IMR-90 (cell line): ENCODE measurements at regions of chr2 and their contacts with region 1.

Region 1: GRCh38 chr2:42047488-42048298 is at the start of gene PKDCC:
- DNase-seq: peak; percentile 79
- ATAC-seq: peak; percentile 88
- H3K4me3 ChIP-seq: peak within 1 kb of the TSS; percentile 94
- H3K27ac ChIP-seq: peak within 1 kb of the TSS; percentile 84
- H3K4me1 ChIP-seq: peaks cover 24% of the 10 kb centered on the region
- H3K27me3 ChIP-seq: no peaks in the 10 kb centered on the region; the same call in 1 of the 2 replicates
- CTCF ChIP-seq: no peak
- POLR2A ChIP-seq: no peak
- RAD21 ChIP-seq: no peak; the same call in 1 of the 2 replicates
- total RNA-seq, gene PKDCC: 50.3 and 55.6 TPM in 2 replicates

Region 2: GRCh38 chr2:41933585-41934320 is 113.9 kb before region 1 on chr2:
- CTCF ChIA-PET with region 1: no interaction called
- POLR2A ChIA-PET with region 1: interaction called, 5 read pairs
- dilution Hi-C with region 1: no loop called
- in situ Hi-C with region 1: no loop called
- intact Hi-C with region 1: loop called (anchors 2 kb)
- DNase-seq: peak; percentile 96
- ATAC-seq: peak; percentile 70
- H3K4me3 ChIP-seq: no peak overlapping the region
- H3K27ac ChIP-seq: peak overlapping the region; percentile 79; the same call in 1 of the 2 replicates
- H3K4me1 ChIP-seq: peaks cover 39% of the 10 kb centered on the region
- H3K27me3 ChIP-seq: no peaks in the 10 kb centered on the region
- CTCF ChIP-seq: no peak
- POLR2A ChIP-seq: no peak
- RAD21 ChIP-seq: peak; percentile 7; the same call in 1 of the 2 replicates

Region 3: DNA sequence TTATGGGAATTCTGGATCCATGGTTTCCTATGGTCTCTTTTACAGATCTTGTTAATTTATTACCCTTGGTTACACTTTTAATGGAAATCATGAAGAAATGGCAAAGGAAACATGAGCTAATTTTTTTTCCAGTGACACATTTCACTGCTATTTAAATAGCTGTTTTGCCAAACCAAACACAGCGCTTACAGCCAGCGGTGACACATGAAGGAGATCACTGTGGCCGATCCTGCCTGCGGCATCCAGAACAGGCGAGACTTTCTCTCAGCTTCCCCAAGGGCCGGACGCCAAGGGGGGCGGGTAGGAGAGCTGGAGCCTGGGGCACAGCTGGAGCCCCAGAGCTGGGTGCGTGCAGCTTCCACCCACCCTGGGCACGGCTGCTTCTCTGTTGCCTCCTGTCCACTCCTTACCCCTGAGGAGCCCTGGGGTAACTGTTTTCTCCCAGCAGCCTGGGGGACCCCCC is 81.2 kb before region 1 on chr2:
- CTCF ChIA-PET with region 1: no interaction called
- POLR2A ChIA-PET with region 1: no interaction called
- dilution Hi-C with region 1: no loop called
- in situ Hi-C with region 1: no loop called
- intact Hi-C with region 1: loop called (anchors 2 kb)
- DNase-seq: peak; percentile 96
- ATAC-seq: peak; percentile 93
- H3K4me3 ChIP-seq: no peak overlapping the region
- H3K27ac ChIP-seq: peak overlapping the region; percentile 5; the same call in 1 of the 2 replicates
- H3K4me1 ChIP-seq: peaks cover 27% of the 10 kb centered on the region
- H3K27me3 ChIP-seq: peaks cover 27% of the 10 kb centered on the region
- CTCF ChIP-seq: no peak
- POLR2A ChIP-seq: no peak
- RAD21 ChIP-seq: peak; percentile 44

Region 4: DNA sequence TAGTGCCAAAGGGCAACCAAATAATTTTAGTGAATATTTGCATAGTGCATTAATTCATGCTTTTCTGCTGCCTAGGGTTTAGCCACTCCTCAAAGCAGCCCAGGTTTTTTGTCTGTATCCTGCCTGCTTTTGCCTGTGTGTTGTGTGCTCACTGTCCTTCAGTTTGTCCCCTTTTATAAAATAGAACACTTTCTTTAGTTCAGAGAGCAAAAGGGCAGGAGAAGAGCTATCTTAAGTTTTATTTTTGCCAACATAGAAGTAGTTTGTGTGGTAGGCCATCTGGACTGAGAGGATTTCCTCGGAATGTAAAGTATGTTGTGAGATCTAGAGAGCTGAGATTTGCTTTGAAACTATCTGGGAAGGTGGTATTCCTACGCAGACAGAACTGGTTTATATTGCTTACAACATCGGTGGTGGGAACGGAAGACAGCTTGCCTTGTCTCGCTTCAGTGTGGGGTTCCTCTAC is 186.3 kb after region 1 on chr2:
- CTCF ChIA-PET with region 1: no interaction called
- POLR2A ChIA-PET with region 1: no interaction called
- dilution Hi-C with region 1: no loop called
- in situ Hi-C with region 1: no loop called
- intact Hi-C with region 1: no loop called
- DNase-seq: peak; percentile 89
- ATAC-seq: peak; percentile 91
- H3K4me3 ChIP-seq: no peak overlapping the region
- H3K27ac ChIP-seq: peak overlapping the region; percentile 78
- H3K4me1 ChIP-seq: peaks cover 7% of the 10 kb centered on the region
- H3K27me3 ChIP-seq: no peaks in the 10 kb centered on the region
- CTCF ChIP-seq: no peak
- POLR2A ChIP-seq: no peak
- RAD21 ChIP-seq: no peak